Activated CD8-positive, alpha-beta memory T cell treated with anti-CD3 and anti-CD28 coated beads, Interleukin-2, amount 10 ng/mL, durations not matched to agents 7 days and 5 days (primary cell): ENCODE measurements at regions of chr16 and their contacts with region 1.

Region 1: GRCh38 chr16:18801197-18801972 is at the start of gene ARL6IP1:
- DNase-seq: peak; percentile 99
- ATAC-seq: peak; percentile 95
- H3K4me3 Mint-ChIP-seq: peak within 1 kb of the TSS; percentile 95
- H3K27ac Mint-ChIP-seq: peak within 1 kb of the TSS; percentile 98
- H3K4me1 Mint-ChIP-seq: peaks cover 66% of the 10 kb centered on the region
- H3K27me3 Mint-ChIP-seq: peaks cover 2% of the 10 kb centered on the region
- total RNA-seq, gene ARL6IP1: 194 to 207 TPM

Region 2: DNA sequence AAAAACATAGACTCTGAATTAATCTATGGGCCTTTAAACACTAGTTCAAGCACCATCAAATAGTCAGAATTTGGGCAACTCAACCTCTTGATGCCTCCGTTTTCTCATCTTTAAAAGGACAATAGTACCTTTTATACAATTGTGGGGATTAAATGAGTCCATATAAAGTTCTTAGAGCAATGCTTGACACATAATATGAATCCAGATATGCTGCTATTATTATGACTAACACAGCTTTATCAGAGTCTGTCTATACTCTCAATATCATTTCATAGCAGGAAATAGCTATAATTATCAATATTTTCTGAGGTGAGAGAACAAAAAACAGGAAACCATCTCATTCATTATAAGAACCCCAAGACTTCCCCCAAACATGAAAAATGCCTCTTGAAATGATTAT is 900.1 kb before region 1 on chr16:
- CTCF ChIA-PET with region 1: no interaction called
- DNase-seq: no peak
- ATAC-seq: no peak
- H3K4me3 Mint-ChIP-seq: no peak overlapping the region
- H3K27ac Mint-ChIP-seq: no peak overlapping the region
- H3K4me1 Mint-ChIP-seq: no peaks in the 10 kb centered on the region
- H3K27me3 Mint-ChIP-seq: no peaks in the 10 kb centered on the region

Region 3: GRCh38 chr16:18789850-18790724 is 11.3 kb before region 1 on chr16 and contains the start of gene RPS15A:
- CTCF ChIA-PET with region 1: interaction called, 126 read pairs
- DNase-seq: peak; percentile 97
- ATAC-seq: peak; percentile 93
- H3K4me3 Mint-ChIP-seq: peak within 1 kb of the TSS; percentile 99
- H3K27ac Mint-ChIP-seq: peak within 1 kb of the TSS; percentile 93
- H3K4me1 Mint-ChIP-seq: peaks cover 54% of the 10 kb centered on the region
- H3K27me3 Mint-ChIP-seq: no peaks in the 10 kb centered on the region
- total RNA-seq, gene RPS15A: 1,517 to 1,668 TPM

Region 4: DNA sequence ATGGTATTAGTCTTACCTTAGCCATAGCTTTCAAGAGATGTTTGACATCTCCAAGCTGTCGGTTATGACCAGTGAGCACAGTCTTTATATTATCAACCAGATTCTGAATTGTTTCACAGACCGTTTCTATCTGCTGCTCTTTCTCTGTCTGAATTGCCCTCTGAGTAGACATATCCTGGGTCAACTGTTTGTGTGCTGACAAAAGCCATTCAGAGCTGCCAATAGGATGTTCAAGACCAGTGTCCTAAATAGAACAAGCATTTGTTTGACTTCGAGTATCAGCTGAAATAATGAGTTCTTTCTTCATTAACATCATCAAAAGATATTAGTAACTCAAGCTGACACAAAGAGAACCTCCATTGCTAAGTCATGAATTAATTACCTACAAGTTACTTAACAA is 14.9 kb after region 1 on chr16:
- CTCF ChIA-PET with region 1: interaction called, 41 read pairs
- DNase-seq: no peak
- ATAC-seq: no peak
- H3K4me3 Mint-ChIP-seq: no peak overlapping the region
- H3K27ac Mint-ChIP-seq: no peak overlapping the region
- H3K4me1 Mint-ChIP-seq: peaks cover 15% of the 10 kb centered on the region
- H3K27me3 Mint-ChIP-seq: no peaks in the 10 kb centered on the region

Region 5: DNA sequence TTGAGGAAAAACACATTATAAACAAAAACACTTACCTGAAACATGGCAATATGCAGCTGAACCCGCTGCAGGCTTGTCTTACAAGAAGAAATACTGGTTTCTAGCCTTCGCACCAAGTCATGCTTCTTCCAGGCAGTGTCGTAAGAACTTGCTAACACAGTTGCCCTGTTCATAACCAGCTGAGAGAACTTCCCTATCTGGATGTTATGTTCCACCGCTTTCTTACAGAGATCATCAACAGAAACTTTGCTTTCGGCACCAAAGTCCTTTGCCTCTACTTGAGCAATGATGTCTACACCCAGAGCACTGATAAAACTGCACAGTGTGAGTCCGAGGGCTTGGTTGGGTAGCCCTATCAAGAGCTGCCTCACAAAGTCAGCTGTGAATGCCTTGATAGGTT is 27.9 kb after region 1 on chr16:
- CTCF ChIA-PET with region 1: interaction called, 14 read pairs
- DNase-seq: no peak
- ATAC-seq: no peak
- H3K4me3 Mint-ChIP-seq: no peak overlapping the region
- H3K27ac Mint-ChIP-seq: no peak overlapping the region
- H3K4me1 Mint-ChIP-seq: peaks cover 7% of the 10 kb centered on the region
- H3K27me3 Mint-ChIP-seq: no peaks in the 10 kb centered on the region

Region 6: DNA sequence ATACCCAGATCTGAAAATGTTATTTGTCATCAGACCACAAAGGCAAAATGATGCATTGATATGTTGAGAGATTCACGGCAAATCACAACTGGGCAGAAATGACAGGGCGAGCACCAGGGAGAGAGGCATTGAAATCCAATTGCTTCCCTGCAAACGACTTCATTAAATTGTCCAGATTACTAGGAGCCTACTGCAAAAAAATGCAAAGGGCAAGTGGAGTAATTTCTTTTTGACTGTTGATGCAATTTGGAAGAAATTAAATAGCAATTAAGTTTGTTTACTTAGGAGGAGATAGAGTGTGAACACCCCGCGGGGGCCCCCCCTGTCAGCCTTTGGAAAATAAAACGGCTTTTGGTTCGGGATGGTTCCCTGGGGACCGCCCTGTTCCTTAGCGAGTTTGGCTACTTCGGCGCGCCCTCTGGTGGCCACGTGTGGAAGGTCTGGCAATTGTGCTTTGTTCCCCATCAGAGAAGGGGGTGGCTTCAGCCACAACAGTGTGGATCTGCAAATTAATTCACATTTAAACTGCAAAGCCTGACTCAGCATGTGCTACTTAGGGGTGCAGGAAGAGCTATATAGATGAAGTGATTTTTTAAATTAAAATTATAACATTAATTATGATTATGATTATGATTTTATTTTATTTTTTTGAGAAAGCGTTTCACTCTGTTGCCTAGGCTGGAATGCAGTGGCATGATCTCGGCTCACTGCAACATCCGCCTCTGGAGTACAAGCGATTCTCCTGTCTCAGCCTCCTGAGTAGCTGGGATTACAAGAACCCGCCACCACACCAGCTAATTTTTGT is 167.9 kb after region 1 on chr16:
- CTCF ChIA-PET with region 1: interaction called, 12 read pairs
- DNase-seq: peak; percentile 86
- ATAC-seq: peak; percentile 91
- H3K4me3 Mint-ChIP-seq: peak overlapping the region; percentile 57
- H3K27ac Mint-ChIP-seq: no peak overlapping the region
- H3K4me1 Mint-ChIP-seq: peaks cover 7% of the 10 kb centered on the region
- H3K27me3 Mint-ChIP-seq: peaks cover 13% of the 10 kb centered on the region